Heart left ventricle (tissue), 16 donors: ENCODE measurements at regions of chr9 and their contacts with region 1.

Region 1: GRCh38 chr9:82532504-82533180 is 530.3 kb downstream of the RASEF start:
- DNase-seq: no peak
- ATAC-seq: no peak
- H3K4me3 ChIP-seq: no peak overlapping the region
- H3K27ac ChIP-seq: no peak overlapping the region
- H3K4me1 ChIP-seq: peaks cover 0 to 6% (median 0%) of the 10 kb centered on the region in 12 donors
- H3K27me3 ChIP-seq: no peaks in the 10 kb centered on the region
- CTCF ChIP-seq: peak in 11 of 12 donors; percentile 17 to 65 (median 46)
- POLR2A ChIP-seq: no peak

Region 2: GRCh38 chr9:82961504-82962125 is 429.0 kb after region 1 on chr9:
- intact Hi-C with region 1: loop called in 5 of 10 experiments (anchors 5 to 10 kb)
- DNase-seq: peak in 4 of 5 donors; percentile 56 to 77 (median 62)
- ATAC-seq: peak in 3 of 4 donors; percentile 85 to 92 (median 89)
- H3K4me3 ChIP-seq: no peak overlapping the region
- H3K27ac ChIP-seq: no peak overlapping the region
- H3K4me1 ChIP-seq: peaks cover 0 to 5% (median 0%) of the 10 kb centered on the region in 12 donors
- H3K27me3 ChIP-seq: peaks cover 0 to 4% (median 0%) of the 10 kb centered on the region in 9 donors
- CTCF ChIP-seq: peak; percentile 61 to 85 (median 72)
- POLR2A ChIP-seq: no peak